ENCODE measurements at regions of chr14 and their contacts with region 1.

Region 1: DNA sequence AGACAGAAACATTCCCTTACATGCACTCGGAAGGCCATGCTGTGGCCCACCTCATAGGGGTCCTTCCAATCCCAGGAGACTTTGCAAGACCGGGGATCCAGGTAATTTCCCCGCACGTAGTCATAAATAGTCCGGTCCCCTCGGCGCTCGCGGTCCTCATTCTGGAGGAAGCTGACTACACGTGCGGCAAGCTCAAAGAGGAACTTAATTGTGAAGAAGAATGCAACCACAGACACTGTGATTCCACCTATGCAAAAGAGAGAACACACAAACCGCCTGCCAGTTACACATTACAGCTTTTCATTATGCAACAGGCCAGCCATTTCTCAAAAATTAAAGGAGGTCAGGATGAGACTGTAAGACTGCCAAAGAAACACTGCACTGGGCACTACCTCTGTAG is 28.4 kb downstream of the AREL1 start:
- DNase-seq: no peak
- ATAC-seq: no peak
- H3K4me3 ChIP-seq: no peak overlapping the region
- H3K27ac ChIP-seq: no peak overlapping the region
- H3K4me1 ChIP-seq: no peaks in the 10 kb centered on the region
- H3K27me3 ChIP-seq: no peaks in the 10 kb centered on the region
- CTCF ChIP-seq: no peak

Region 2: GRCh38 chr14:74641601-74642391 is 42.6 kb before region 1 on chr14:
- CTCF ChIA-PET with region 1: no interaction called
- POLR2A ChIA-PET with region 1: interaction called, 10 read pairs
- in situ Hi-C with region 1: no loop called
- intact Hi-C with region 1: no loop called
- DNase-seq: no peak
- ATAC-seq: peak; percentile 13; the same call in 1 of the 2 replicates
- H3K4me3 ChIP-seq: no peak overlapping the region
- H3K27ac ChIP-seq: no peak overlapping the region
- H3K4me1 ChIP-seq: no peaks in the 10 kb centered on the region
- H3K27me3 ChIP-seq: no peaks in the 10 kb centered on the region
- CTCF ChIP-seq: no peak

Region 3: DNA sequence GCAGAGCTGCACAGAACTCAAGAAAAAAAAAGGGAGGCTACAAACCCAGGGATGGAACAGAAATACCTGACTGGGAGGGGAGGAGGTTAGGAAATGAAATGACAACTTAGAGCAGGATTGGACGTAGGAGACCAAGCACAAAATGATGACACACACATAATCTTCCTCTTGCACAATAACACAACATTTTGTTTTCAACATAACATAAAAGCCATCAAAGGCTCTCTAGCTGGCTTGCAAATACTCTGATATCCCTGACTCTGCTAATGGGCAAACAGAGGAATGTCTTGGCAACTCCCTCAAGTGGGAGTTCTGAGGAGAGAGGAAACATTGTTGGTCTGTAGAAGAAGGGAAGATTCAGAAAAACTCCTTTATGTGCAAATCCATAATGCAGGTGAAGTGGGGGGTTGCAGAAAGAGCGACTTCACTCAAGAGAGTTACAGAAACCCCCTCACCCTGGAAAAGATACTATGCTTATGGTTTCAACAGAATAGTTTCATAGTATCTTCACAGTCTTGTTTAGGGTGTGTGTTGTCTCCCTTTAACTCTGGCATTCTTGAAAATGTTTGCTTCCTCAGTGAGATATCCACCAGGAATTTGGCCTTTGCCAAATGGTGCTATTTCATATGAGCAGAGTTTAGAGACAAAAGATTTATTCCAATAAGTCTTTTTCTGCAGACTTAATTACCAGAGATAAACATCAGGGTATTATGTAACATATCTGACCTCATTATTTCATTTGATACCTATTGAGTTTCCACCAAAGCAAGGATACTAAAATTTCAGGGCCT is 28.6 kb before region 1 on chr14:
- CTCF ChIA-PET with region 1: interaction called, 11 read pairs
- POLR2A ChIA-PET with region 1: no interaction called
- in situ Hi-C with region 1: no loop called
- intact Hi-C with region 1: no loop called
- DNase-seq: no peak
- ATAC-seq: no peak
- H3K4me3 ChIP-seq: no peak overlapping the region
- H3K27ac ChIP-seq: no peak overlapping the region
- H3K4me1 ChIP-seq: no peaks in the 10 kb centered on the region; the same call in 1 of the 2 replicates
- H3K27me3 ChIP-seq: no peaks in the 10 kb centered on the region
- CTCF ChIP-seq: no peak